ENCODE measurements at regions of chr14 and their contacts with region 1.

Region 1: DNA sequence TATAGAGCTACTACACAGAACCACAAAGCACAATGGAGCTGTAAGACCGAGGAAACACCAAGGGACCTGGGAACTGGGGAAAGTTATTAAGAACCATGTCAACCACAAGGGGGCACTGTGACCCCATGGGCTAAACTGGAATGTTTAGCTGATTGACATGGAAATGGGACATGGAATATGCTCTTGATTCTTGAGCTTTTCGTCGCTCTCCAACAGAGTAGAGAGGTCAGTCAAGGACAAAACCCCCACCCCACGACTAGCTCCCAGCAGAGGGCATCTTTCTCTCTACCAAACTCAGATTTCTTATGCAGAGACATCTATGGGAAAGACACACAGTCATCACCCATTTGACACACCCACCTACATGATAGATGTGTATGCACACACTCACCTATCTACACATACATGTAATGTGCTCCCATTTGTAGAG is 10.1 kb downstream of the NDRG2 start:
- DNase-seq: peak; percentile 67 to 91 (median 78)
- ATAC-seq: peak; percentile 87
- H3K4me3 ChIP-seq: no peak overlapping the region
- H3K4me3 Mint-ChIP-seq: no peak overlapping the region
- H3K27ac ChIP-seq: no peak overlapping the region
- H3K27ac Mint-ChIP-seq: no peak overlapping the region
- H3K4me1 ChIP-seq: no peaks in the 10 kb centered on the region
- H3K4me1 Mint-ChIP-seq: no peaks in the 10 kb centered on the region
- H3K27me3 ChIP-seq: peaks cover 0 to 6% of the 10 kb centered on the region in 2 experiments
- H3K27me3 Mint-ChIP-seq: peaks cover 23% of the 10 kb centered on the region
- CTCF ChIP-seq: peak; percentile 95

Region 2: GRCh38 chr14:21024585-21025370 is 10.0 kb after region 1 on chr14 and contains the start of gene NDRG2:
- CTCF ChIA-PET with region 1: interaction called, 14 read pairs
- POLR2A ChIA-PET with region 1: interaction called, 19 read pairs
- intact Hi-C with region 1: no loop called
- DNase-seq: peak; percentile 66 to 89 (median 78)
- ATAC-seq: peak; percentile 88
- H3K4me3 ChIP-seq: peak within 1 kb of the TSS; percentile 94
- H3K4me3 Mint-ChIP-seq: peak within 1 kb of the TSS; percentile 93
- H3K27ac ChIP-seq: no peak within 1 kb of the TSS
- H3K27ac Mint-ChIP-seq: peak within 1 kb of the TSS; percentile 74
- H3K4me1 ChIP-seq: peaks cover 28% of the 10 kb centered on the region
- H3K4me1 Mint-ChIP-seq: peaks cover 21% of the 10 kb centered on the region
- H3K27me3 ChIP-seq: no peaks in the 10 kb centered on the region
- H3K27me3 Mint-ChIP-seq: no peaks in the 10 kb centered on the region
- CTCF ChIP-seq: no peak
- total RNA-seq, gene NDRG2: 26.7 to 28.6 TPM

Region 3: DNA sequence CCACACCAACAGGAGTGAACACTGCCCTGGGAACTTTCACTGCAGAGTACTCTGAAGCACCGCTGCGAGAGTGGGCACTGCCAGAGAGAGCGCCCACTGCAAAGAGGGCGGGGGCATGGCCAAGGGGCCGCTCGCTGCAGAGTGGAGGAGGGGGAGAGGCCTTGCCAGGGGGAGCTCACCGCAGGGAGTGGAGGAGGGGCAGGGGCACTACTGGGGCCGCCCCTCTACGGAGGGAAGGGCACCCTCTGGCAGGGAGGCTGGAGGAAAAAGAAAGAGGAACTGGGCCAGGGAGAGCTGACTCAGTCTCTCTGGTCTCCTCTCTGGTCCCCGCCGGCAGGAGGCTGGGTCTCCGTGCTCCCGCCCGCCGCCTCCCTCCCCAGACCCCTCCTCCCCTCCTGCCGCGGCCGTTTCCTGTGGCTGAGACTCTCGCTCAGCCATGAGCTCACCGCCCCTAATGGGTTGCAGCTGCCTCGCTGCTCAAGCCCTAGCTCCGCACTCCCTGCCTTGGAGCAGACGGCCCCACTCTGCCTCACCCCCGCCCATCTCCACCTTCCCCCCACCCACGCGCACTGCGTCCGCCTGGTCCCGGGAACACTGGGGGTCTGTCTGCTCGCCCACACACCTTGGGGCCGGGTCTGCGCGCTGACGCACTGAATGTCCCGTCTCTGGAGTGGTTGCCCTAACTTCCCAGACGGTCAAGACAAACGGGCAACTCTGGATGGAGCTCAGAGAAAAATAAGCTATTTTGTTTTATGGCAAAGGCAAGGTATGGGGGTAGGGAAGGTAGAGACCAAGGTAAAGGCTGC is 56.7 kb after region 1 on chr14:
- CTCF ChIA-PET with region 1: interaction called, 22 read pairs
- POLR2A ChIA-PET with region 1: interaction called, 5 read pairs
- intact Hi-C with region 1: no loop called
- DNase-seq: peak in 8 of 14 experiments; percentile 19 to 76 (median 50)
- ATAC-seq: peak; percentile 37
- H3K4me3 ChIP-seq: peak overlapping the region; percentile 51
- H3K4me3 Mint-ChIP-seq: peak overlapping the region; percentile 86
- H3K27ac ChIP-seq: no peak overlapping the region
- H3K27ac Mint-ChIP-seq: no peak overlapping the region
- H3K4me1 ChIP-seq: peaks cover 37% of the 10 kb centered on the region
- H3K4me1 Mint-ChIP-seq: peaks cover 37% of the 10 kb centered on the region
- H3K27me3 ChIP-seq: peaks cover 40 to 59% of the 10 kb centered on the region in 2 experiments
- H3K27me3 Mint-ChIP-seq: peaks cover 71% of the 10 kb centered on the region
- CTCF ChIP-seq: no peak

Region 4: DNA sequence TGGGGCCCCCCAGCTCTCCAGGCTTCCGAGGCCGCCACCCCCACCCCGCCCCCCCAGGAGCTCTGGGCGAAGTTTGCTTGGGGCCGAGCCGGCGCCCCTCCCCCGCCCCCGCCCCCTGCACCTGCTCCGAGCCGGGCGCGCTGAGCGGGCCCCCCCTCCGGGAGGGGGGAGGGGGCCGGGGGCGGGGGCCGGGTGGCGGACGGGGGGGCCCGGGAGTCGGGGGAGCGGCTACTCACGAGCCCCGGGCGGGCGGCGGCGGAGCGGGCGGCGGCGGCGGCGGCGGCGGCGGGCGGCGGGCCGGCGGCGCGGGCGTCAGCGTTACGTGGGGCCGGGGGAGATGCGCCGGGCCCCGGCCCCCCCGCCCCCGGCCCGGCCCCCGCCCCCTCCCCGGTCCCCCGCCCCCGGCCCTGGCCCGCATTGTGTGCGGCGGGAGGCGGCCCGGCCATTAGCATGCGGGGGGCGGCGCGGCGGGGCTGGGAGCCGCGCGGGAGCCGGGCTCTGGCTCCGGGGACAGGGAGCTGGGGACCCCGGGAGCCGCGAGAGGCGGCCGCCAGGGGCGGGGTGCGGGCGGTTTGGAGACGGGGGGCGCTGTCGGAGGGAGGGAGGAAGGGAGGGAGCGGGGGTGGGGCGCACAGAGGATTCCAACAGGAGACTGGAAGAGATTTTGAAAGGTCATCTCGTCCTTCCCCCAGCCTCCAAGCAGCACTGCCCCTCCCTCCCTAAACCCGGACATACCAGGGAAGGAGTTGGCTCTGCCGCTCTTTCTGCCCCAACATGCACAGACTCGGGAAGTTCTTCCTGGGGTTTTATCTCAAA is 83.5 kb after region 1 on chr14 and contains the start of gene ZNF219:
- CTCF ChIA-PET with region 1: interaction called, 94 read pairs
- POLR2A ChIA-PET with region 1: interaction called, 34 read pairs
- intact Hi-C with region 1: no loop called
- DNase-seq: peak in 6 of 14 experiments; percentile 11 to 71 (median 48)
- ATAC-seq: peak; percentile 51
- H3K4me3 ChIP-seq: peak within 1 kb of the TSS; percentile 61
- H3K4me3 Mint-ChIP-seq: peak within 1 kb of the TSS; percentile 90
- H3K27ac ChIP-seq: peak within 1 kb of the TSS; percentile 36 to 74
- H3K27ac Mint-ChIP-seq: peak within 1 kb of the TSS; percentile 84
- H3K4me1 ChIP-seq: peaks cover 23% of the 10 kb centered on the region
- H3K4me1 Mint-ChIP-seq: peaks cover 38% of the 10 kb centered on the region
- H3K27me3 ChIP-seq: no peaks in the 10 kb centered on the region
- H3K27me3 Mint-ChIP-seq: no peaks in the 10 kb centered on the region
- CTCF ChIP-seq: no peak
- total RNA-seq, gene ZNF219: 15.2 to 15.5 TPM

Region 5: DNA sequence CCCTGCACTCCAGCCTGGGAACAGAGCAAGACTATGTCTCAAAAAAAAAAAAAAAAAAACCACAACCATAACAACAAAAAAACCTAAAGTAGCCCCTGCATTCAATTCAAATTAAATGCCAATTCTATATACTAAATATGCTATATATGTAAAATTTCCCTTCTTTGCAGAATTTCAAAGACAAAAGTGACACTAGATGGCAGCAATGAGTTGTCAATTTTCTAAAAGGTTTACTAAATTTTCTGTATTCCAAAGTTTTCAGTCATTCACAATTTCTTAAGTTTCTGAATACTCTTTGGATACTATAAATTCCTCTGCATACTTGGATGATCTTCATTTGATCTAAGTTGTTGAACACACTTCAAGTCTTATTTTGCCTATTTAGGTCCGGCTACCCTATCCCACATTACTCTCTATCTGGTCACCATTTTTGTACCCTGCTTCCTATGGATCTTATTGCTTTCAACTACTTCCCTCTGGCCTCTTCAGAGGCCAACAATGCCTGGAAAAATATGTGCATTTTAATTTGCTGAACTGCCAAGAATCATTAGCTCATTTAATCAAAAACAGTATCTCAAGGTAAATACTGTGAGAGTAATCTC is 226.5 kb after region 1 on chr14:
- CTCF ChIA-PET with region 1: no interaction called
- POLR2A ChIA-PET with region 1: no interaction called
- intact Hi-C with region 1: no loop called
- DNase-seq: peak in 3 of 14 experiments; percentile 55 to 67 (median 63)
- ATAC-seq: no peak
- H3K4me3 ChIP-seq: no peak overlapping the region
- H3K4me3 Mint-ChIP-seq: no peak overlapping the region
- H3K27ac ChIP-seq: no peak overlapping the region
- H3K27ac Mint-ChIP-seq: peak overlapping the region; percentile 11
- H3K4me1 ChIP-seq: peaks cover 45% of the 10 kb centered on the region
- H3K4me1 Mint-ChIP-seq: peaks cover 75% of the 10 kb centered on the region
- H3K27me3 ChIP-seq: no peaks in the 10 kb centered on the region
- H3K27me3 Mint-ChIP-seq: no peaks in the 10 kb centered on the region
- CTCF ChIP-seq: peak; percentile 66

Region 6: GRCh38 chr14:21395444-21395843 is 380.7 kb after region 1 on chr14:
- CTCF ChIA-PET with region 1: no interaction called
- POLR2A ChIA-PET with region 1: no interaction called
- intact Hi-C with region 1: no loop called
- DNase-seq: no peak
- ATAC-seq: no peak
- H3K4me3 ChIP-seq: no peak overlapping the region
- H3K4me3 Mint-ChIP-seq: no peak overlapping the region
- H3K27ac ChIP-seq: no peak overlapping the region
- H3K27ac Mint-ChIP-seq: no peak overlapping the region
- H3K4me1 ChIP-seq: no peaks in the 10 kb centered on the region
- H3K4me1 Mint-ChIP-seq: no peaks in the 10 kb centered on the region
- H3K27me3 ChIP-seq: no peaks in the 10 kb centered on the region
- H3K27me3 Mint-ChIP-seq: no peaks in the 10 kb centered on the region
- CTCF ChIP-seq: no peak